ENCODE measurements at regions of chr5 and their contacts with region 1.

Region 1: DNA sequence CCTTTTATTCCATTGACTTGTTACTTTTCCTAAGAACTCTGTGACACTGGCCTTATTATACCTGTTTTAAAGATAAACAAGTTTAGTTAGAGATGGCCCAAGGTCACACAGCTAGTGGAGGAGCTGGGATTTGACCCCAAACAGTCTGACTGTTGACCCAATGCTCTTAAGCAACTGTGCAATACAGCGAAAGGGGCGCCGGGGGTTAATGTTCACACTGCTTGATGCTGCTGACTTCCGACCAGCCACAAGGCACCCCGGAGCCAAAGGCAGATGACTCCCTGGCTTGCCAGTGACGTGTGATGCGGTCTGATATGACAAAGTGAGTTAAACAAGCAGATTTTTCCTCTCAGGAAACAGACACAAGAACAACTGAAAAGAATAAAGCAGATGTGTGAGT is 23.9 kb downstream of the PIK3R1 start:
- DNase-seq: peak; percentile 62 to 94 (median 83)
- ATAC-seq: peak; percentile 95
- H3K4me3 ChIP-seq: no peak overlapping the region
- H3K4me3 Mint-ChIP-seq: peak overlapping the region; percentile 66
- H3K27ac ChIP-seq: peak overlapping the region; percentile 5 to 78
- H3K27ac Mint-ChIP-seq: peak overlapping the region; percentile 89
- H3K4me1 ChIP-seq: peaks cover 63% of the 10 kb centered on the region
- H3K4me1 Mint-ChIP-seq: peaks cover 86% of the 10 kb centered on the region
- H3K27me3 ChIP-seq: no peaks in the 10 kb centered on the region
- H3K27me3 Mint-ChIP-seq: no peaks in the 10 kb centered on the region
- CTCF ChIP-seq: no peak

Region 2: DNA sequence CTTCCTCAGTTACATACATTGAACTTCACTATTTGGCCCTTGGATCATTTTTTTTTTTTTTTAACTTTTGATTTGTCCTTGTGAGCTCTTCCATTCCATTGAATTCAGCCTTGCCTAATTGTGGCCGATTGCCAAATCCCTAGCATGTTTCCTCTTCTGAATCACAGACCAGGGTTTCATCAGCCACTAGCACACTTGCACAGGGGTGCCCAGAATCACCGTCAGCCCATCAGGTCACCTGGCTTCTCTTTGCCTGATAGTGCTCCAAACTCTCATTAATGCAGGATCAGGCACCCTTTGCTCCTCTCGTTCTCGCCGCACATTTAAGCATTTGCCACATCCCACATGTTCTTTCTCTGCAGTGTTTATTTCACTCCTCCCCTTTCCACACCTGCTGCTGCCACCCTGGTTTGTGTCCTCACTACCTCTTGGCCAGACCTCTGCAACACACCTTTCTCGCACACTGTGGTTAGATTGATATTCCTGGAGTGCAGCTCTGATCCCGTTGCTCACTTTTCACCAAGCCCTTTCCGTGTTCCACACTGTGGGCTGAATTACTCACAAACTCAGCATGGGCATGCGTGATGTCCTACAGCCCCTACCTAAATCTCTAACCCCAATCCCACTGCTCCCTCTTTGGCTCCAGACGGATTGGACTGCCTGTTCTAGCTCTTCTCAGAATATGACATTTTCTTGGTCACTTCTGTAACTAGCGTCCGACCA is 14.1 kb before region 1 on chr5:
- CTCF ChIA-PET with region 1: interaction called, 8 read pairs
- POLR2A ChIA-PET with region 1: interaction called, 7 read pairs
- intact Hi-C with region 1: loop called in 1 of 2 experiments (anchors 1 kb)
- DNase-seq: no peak
- ATAC-seq: no peak
- H3K4me3 ChIP-seq: no peak overlapping the region
- H3K4me3 Mint-ChIP-seq: no peak overlapping the region
- H3K27ac ChIP-seq: no peak overlapping the region
- H3K27ac Mint-ChIP-seq: peak overlapping the region; percentile 8
- H3K4me1 ChIP-seq: peaks cover 60% of the 10 kb centered on the region
- H3K4me1 Mint-ChIP-seq: peaks cover 87% of the 10 kb centered on the region
- H3K27me3 ChIP-seq: no peaks in the 10 kb centered on the region
- H3K27me3 Mint-ChIP-seq: no peaks in the 10 kb centered on the region
- CTCF ChIP-seq: no peak

Measured in CD8-positive, alpha-beta T cell (primary cell).